Mammary epithelial cell (primary cell): ENCODE measurements at regions of chr1 and their contacts with region 1.

Region 1: GRCh38 chr1:194151056-194151455 is 964.6 kb upstream of the B3GALT2 start:
- DNase-seq: no peak
- H3K4me3 ChIP-seq: no peak overlapping the region
- H3K27ac ChIP-seq: no peak overlapping the region
- H3K4me1 ChIP-seq: no peaks in the 10 kb centered on the region
- H3K27me3 ChIP-seq: no peaks in the 10 kb centered on the region
- CTCF ChIP-seq: no peak

Region 2: GRCh38 chr1:193539731-193540459 is 611.2 kb before region 1 on chr1:
- CTCF ChIA-PET with region 1: no interaction called
- dilution Hi-C with region 1: no loop called
- in situ Hi-C with region 1: no loop called
- intact Hi-C with region 1: loop called (anchors 5 kb)
- DNase-seq: no peak
- H3K4me3 ChIP-seq: no peak overlapping the region
- H3K27ac ChIP-seq: no peak overlapping the region
- H3K4me1 ChIP-seq: no peaks in the 10 kb centered on the region
- H3K27me3 ChIP-seq: peaks cover 2% of the 10 kb centered on the region
- CTCF ChIP-seq: no peak

Region 3: DNA sequence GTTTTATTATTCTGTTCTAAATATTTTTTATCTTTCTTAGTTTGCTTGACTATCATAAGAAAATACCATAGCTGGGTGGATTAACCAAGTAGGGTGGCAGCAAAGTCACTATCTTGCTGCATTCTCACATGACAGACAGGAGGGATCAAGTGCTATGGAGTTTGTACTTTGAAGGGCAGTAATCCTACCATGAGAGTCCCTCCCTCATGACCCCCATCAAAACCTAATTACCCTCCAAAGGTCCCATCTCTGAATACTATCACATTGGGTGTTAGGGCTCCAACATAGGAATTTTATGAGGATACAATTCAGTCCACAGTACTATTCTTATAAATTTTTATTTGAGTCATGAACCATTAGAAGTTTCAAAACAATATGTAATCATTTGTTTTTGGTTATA is 576.1 kb before region 1 on chr1:
- CTCF ChIA-PET with region 1: no interaction called
- dilution Hi-C with region 1: no loop called
- in situ Hi-C with region 1: no loop called
- intact Hi-C with region 1: no loop called
- DNase-seq: no peak
- H3K4me3 ChIP-seq: no peak overlapping the region
- H3K27ac ChIP-seq: no peak overlapping the region
- H3K4me1 ChIP-seq: no peaks in the 10 kb centered on the region
- H3K27me3 ChIP-seq: no peaks in the 10 kb centered on the region
- CTCF ChIP-seq: no peak